ENCODE measurements at regions of chr12 and their contacts with region 1.

Region 1: DNA sequence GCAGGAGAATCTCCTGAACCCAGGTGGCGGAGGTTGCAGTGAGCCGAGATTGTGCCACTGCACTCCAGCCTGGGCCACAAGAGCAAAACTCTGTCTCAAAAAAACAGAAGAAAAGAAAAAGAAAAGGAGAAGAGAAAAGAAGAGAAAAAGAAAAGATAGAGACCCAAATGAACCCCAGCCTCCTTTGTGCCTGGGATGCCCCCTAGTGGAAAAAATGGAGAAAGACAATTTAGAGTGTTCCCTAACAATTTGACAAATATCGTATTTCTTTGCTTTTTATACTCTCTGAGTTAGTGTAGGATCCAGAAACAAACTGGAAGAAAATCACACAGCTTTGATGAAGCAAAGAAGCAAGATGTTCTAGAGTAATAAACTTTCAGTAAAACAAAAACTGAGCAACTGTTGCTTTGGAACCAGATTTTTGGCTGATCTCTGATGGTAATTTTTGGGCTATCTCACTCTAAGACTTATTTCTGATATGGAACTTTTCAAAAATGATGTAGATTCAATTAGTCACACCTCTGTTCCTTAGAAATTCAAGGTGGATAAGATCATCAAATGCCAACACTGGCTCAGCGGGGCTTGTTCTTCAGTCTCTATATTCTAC is 18.6 kb upstream of the PRKAB1 start:
- DNase-seq: no peak
- H3K4me3 Mint-ChIP-seq: no peak overlapping the region
- H3K27ac Mint-ChIP-seq: no peak overlapping the region
- H3K4me1 Mint-ChIP-seq: no peaks in the 10 kb centered on the region
- H3K27me3 Mint-ChIP-seq: no peaks in the 10 kb centered on the region
- CTCF ChIP-seq: peak; percentile 71

Region 2: GRCh38 chr12:119444456-119445044 is 204.8 kb before region 1 on chr12:
- CTCF ChIA-PET with region 1: no interaction called
- intact Hi-C with region 1: loop called (anchors 1 kb)
- DNase-seq: peak; percentile 52
- H3K4me3 Mint-ChIP-seq: no peak overlapping the region
- H3K27ac Mint-ChIP-seq: no peak overlapping the region
- H3K4me1 Mint-ChIP-seq: no peaks in the 10 kb centered on the region
- H3K27me3 Mint-ChIP-seq: peaks cover 48% of the 10 kb centered on the region
- CTCF ChIP-seq: peak; percentile 93

Region 3: GRCh38 chr12:119500209-119500608 is 149.1 kb before region 1 on chr12:
- CTCF ChIA-PET with region 1: no interaction called
- intact Hi-C with region 1: loop called (anchors 1 kb)
- DNase-seq: no peak
- H3K4me3 Mint-ChIP-seq: no peak overlapping the region
- H3K27ac Mint-ChIP-seq: no peak overlapping the region
- H3K4me1 Mint-ChIP-seq: no peaks in the 10 kb centered on the region
- H3K27me3 Mint-ChIP-seq: peaks cover 66% of the 10 kb centered on the region
- CTCF ChIP-seq: no peak

Region 4: DNA sequence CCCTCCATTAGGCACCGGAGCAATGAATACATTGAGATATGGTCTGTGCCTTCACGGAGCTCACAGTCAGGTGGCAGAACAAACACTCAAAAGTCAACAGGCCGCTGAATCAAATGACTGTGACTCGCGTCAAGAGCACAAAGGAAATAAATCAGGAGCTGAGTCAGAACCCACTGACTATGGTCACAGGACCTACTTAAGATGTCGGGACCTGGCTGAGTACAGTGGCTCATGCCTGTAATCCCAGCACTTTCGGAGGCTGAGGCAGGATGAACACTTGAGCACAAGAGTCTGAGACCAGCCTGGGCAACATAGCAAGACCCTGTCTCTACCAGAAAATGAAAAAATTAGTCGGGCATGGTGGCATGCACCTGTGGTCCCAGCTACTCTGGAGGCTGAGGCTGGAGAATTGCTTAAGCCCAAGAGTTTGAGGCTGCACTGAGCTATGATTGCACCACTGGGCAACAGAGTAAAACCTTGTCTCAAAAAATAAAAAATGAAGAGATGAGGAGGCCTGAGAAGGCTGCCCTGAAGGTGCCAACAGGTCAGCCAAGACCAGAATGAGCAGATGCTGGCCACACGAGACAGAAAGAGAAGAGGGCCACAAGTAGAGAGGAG is 35.9 kb before region 1 on chr12:
- CTCF ChIA-PET with region 1: no interaction called
- intact Hi-C with region 1: loop called (anchors 5 kb)
- DNase-seq: peak; percentile 42
- H3K4me3 Mint-ChIP-seq: no peak overlapping the region
- H3K27ac Mint-ChIP-seq: peak overlapping the region; percentile 16
- H3K4me1 Mint-ChIP-seq: peaks cover 19% of the 10 kb centered on the region
- H3K27me3 Mint-ChIP-seq: peaks cover 13% of the 10 kb centered on the region
- CTCF ChIP-seq: no peak